ENCODE measurements at regions of chr13 and their contacts with region 1.

Region 1: DNA sequence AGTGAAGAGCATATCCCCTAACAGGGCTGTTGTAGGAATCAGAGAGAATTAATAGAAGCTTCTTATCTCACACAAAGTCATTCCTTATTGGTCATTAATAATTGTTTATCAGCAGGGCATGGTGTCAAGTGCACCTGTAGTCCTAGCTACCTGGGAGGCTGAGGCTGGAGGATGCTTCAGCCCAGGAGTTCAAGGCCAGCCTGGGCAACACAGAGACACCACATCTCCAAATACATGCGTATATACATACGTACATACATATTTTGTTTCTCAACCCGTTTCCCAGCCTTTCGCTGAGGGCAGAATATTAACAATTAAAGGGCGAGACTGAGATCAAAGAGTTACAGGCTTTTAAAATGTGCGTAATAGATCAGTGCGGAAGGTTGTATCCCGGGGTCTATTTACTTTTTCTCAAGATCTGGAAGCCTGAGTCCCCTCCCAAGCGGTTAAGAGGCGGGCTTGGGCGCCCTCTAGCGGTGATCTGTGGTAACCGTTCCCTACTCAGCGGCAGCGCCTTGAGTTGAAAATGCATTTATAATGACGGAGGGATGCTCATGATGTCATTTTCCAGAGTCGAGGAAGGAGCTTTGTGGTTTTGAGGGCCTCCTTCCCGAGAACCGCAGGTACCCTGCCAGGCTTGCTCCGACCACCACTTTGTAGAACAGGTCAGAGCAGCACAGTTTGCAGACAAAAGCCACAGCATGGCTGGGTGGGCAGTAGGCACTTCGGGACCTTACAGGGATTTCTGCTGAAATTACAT is 169.6 kb upstream of the GPR12 start:
- DNase-seq: peak; percentile 83
- H3K4me3 ChIP-seq: no peak overlapping the region
- H3K27ac ChIP-seq: no peak overlapping the region
- H3K4me1 ChIP-seq: no peaks in the 10 kb centered on the region
- H3K27me3 ChIP-seq: peaks cover 27% of the 10 kb centered on the region
- CTCF ChIP-seq: peak; percentile 94

Region 2: GRCh38 chr13:25874907-25875306 is 1055.2 kb before region 1 on chr13:
- CTCF ChIA-PET with region 1: no interaction called
- POLR2A ChIA-PET with region 1: no interaction called
- intact Hi-C with region 1: no loop called
- DNase-seq: peak; percentile 74
- H3K4me3 ChIP-seq: no peak overlapping the region
- H3K27ac ChIP-seq: peak overlapping the region; percentile 1
- H3K4me1 ChIP-seq: peaks cover 43% of the 10 kb centered on the region
- H3K27me3 ChIP-seq: no peaks in the 10 kb centered on the region
- CTCF ChIP-seq: no peak

Region 3: GRCh38 chr13:26482451-26483197 is 447.5 kb before region 1 on chr13:
- CTCF ChIA-PET with region 1: no interaction called
- POLR2A ChIA-PET with region 1: interaction called, 15 read pairs
- intact Hi-C with region 1: loop called (anchors 2 kb)
- DNase-seq: peak; percentile 83
- H3K4me3 ChIP-seq: no peak overlapping the region
- H3K27ac ChIP-seq: no peak overlapping the region
- H3K4me1 ChIP-seq: no peaks in the 10 kb centered on the region
- H3K27me3 ChIP-seq: no peaks in the 10 kb centered on the region
- CTCF ChIP-seq: peak; percentile 88

Region 4: GRCh38 chr13:26707122-26708006 is 222.8 kb before region 1 on chr13:
- CTCF ChIA-PET with region 1: no interaction called
- POLR2A ChIA-PET with region 1: no interaction called
- intact Hi-C with region 1: loop called (anchors 2 kb)
- DNase-seq: peak; percentile 58
- H3K4me3 ChIP-seq: no peak overlapping the region
- H3K27ac ChIP-seq: no peak overlapping the region
- H3K4me1 ChIP-seq: no peaks in the 10 kb centered on the region
- H3K27me3 ChIP-seq: no peaks in the 10 kb centered on the region
- CTCF ChIP-seq: peak; percentile 61

Region 5: DNA sequence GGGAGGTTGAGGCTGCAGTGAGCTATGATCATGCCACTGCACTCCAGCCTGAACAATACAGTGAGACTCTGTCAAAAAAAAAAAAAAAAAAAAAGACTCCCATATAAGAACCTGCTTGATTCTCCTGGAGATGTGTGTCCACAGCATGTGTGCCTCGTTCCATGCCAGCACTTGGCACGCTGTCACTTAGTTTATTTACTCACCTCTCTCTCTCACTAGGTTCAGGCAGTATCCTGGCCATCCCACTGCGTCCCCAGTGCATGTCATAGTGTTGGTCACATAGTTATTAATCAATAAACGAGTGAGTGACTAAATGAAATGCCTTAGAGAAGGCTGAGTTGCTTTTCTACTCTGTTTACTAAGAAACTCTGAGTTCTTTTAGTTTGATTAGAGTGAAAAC is 90.5 kb before region 1 on chr13:
- CTCF ChIA-PET with region 1: interaction called, 10 read pairs
- POLR2A ChIA-PET with region 1: no interaction called
- intact Hi-C with region 1: no loop called
- DNase-seq: no peak
- H3K4me3 ChIP-seq: no peak overlapping the region
- H3K27ac ChIP-seq: no peak overlapping the region
- H3K4me1 ChIP-seq: no peaks in the 10 kb centered on the region
- H3K27me3 ChIP-seq: peaks cover 5% of the 10 kb centered on the region
- CTCF ChIP-seq: no peak

Measured in A673 (cell line).